Activated CD4-positive, alpha-beta T cell treated with anti-CD3 and anti-CD28 coated beads for 36 hours (primary cell): ENCODE measurements at regions of chr5 and their contacts with region 1.

Region 1: GRCh38 chr5:157743163-157744050 is at the start of gene LSM11:
- DNase-seq: peak; percentile 95
- ATAC-seq: peak; percentile 92
- H3K4me3 Mint-ChIP-seq: peak within 1 kb of the TSS; percentile 93
- H3K27ac Mint-ChIP-seq: peak within 1 kb of the TSS; percentile 89
- H3K4me1 Mint-ChIP-seq: peaks cover 36% of the 10 kb centered on the region
- H3K27me3 Mint-ChIP-seq: no peaks in the 10 kb centered on the region
- total RNA-seq, gene LSM11: 6.2 to 8.0 TPM

Region 2: DNA sequence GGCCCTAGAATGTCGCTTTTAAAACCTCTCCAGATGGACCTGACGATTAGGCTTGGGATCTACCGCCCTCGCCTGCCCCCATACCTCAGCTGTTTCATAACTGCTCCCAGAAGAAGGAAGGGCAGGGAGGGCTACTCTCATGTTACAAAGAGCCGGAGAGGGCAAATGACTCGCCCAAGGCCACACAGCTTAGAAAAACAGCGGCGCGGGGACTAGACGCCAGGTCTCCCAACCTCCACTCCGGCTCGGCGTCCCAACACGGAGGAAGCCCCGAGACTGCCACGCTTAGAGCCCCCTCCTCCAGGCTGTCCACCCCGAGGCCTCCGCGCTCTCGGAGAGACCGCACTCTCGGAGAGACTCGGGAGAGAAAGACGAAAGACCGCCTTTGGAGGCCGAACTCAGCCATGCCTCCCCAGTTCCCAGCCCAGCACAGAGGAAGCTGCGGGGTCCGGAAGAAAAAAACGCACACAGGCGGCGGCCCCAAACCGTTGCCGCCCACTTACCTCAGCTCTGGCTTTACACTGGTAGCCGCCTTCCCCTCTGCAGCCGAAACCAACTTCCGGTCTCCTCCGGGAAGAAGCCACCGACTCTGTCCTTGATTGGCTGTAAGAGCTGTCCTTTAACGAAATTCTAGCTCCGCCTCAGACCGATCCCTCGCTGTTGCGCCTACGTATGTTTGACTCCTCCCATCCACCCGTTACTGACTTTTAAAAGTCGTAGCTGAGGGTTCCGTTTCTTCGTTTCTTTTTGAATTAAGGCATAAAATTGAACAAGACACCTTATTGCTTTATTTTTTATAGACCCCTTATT is 600.9 kb before region 1 on chr5 and contains the start of gene MED7:
- CTCF ChIA-PET with region 1: no interaction called
- POLR2A ChIA-PET with region 1: no interaction called
- intact Hi-C with region 1: loop called in 1 of 2 experiments (anchors 2 kb)
- DNase-seq: peak; percentile 95
- ATAC-seq: peak; percentile 98
- H3K4me3 Mint-ChIP-seq: peak within 1 kb of the TSS; percentile 84
- H3K27ac Mint-ChIP-seq: peak within 1 kb of the TSS; percentile 99
- H3K4me1 Mint-ChIP-seq: peaks cover 46% of the 10 kb centered on the region
- H3K27me3 Mint-ChIP-seq: no peaks in the 10 kb centered on the region
- total RNA-seq, gene MED7: 10.0 to 16.9 TPM

Region 3: DNA sequence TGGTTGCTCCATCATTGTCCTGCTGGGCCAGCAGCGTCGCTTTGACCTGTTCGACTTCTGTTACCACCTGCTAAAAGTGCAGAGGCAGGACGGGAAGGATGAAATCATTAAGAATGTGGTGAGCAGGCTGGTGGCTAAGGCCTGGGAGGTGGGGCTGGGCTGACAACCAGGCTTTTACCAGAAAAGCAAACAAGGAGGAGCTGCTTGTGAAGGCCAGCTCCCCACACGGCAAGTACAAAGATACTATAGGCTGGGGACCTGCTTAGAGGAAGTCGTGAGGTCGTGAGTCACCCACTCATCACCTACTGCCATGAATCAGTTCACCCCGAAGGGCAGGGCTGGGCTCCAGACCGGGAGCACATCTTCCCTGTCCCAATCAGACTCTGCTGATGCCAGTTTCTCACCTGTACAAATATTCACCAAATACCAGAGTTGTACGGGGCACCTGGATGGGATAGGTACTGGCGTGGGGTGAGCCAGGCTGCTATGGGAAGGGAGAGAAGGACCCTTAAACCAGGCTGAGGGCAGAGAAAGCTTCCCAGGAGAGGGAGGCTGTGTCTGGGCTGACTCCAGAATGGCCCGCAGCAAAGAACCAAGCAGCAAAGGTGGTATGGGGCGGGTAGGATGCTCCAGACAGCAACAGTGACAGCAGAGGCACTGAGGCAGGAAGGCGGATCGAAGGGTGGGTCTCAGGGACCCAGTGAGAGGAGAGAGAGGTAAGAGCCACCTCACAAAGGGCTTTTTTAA is 352.7 kb before region 1 on chr5:
- CTCF ChIA-PET with region 1: interaction called, 9 read pairs
- POLR2A ChIA-PET with region 1: no interaction called
- intact Hi-C with region 1: loop called in 1 of 2 experiments (anchors 1 kb)
- DNase-seq: peak; percentile 88
- ATAC-seq: peak; percentile 98
- H3K4me3 Mint-ChIP-seq: peak overlapping the region; percentile 12
- H3K27ac Mint-ChIP-seq: peak overlapping the region; percentile 96
- H3K4me1 Mint-ChIP-seq: peaks cover 24% of the 10 kb centered on the region
- H3K27me3 Mint-ChIP-seq: no peaks in the 10 kb centered on the region

Region 4: DNA sequence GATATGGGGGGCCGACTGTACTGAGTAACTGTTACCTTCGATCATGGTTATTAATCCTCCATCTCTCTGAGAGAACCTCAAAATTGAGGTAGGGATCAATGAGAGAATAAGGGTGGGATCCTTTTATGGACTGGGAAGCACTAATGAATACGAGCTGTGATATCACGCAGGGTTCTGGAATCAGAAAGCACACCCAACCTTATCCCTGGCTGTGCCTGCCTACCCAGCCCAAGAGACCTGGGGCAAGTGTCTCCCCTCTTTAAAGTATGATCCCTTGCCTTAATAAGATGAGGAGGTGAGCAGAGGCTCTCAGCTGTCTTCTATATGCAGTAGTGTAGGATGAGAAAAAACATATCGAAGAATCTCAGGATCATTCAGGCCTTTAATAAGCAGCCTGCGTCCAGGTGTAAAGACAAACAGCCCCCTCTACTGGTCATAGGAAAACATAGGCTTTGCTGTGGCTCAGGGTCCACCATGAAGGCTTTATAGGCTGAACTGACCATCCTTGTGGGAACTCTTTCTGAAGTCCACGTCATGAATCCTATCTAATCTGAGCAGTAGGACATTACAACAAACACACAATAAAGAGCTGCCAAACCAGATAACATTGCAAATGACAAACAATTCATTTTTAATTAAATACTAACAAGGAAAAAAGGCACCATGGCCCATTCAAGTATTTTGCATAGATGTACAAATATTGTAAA is 266.6 kb before region 1 on chr5:
- CTCF ChIA-PET with region 1: interaction called, 5 read pairs
- POLR2A ChIA-PET with region 1: no interaction called
- intact Hi-C with region 1: loop called in 1 of 2 experiments (anchors 5 kb)
- DNase-seq: peak; percentile 42
- ATAC-seq: peak; percentile 68
- H3K4me3 Mint-ChIP-seq: no peak overlapping the region
- H3K27ac Mint-ChIP-seq: no peak overlapping the region
- H3K4me1 Mint-ChIP-seq: peaks cover 9% of the 10 kb centered on the region
- H3K27me3 Mint-ChIP-seq: no peaks in the 10 kb centered on the region

Region 5: DNA sequence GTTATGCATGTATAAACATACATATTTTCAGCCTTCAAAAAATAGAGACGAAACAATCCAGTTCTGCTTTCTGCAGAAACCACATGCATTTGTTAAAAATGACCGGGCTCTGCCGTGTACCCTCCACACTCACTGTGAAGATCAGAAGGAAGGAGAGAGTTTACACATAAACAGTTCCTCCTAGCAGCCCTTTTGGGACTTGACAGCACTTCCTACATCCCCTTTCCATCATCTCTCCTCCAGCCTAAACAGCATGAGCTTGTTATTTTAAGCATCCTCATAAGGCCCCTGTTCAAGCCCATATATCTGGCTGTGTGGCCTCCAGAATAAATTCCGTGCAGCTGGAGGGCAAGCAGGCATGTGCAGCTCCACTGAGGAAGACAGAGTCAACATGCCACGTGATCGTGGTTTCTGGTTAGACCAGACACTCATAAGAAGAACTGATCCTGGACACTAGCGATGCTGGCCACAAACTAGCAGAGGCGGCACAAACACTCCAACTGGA is 241.2 kb before region 1 on chr5:
- CTCF ChIA-PET with region 1: no interaction called
- POLR2A ChIA-PET with region 1: no interaction called
- intact Hi-C with region 1: no loop called
- DNase-seq: no peak
- ATAC-seq: no peak
- H3K4me3 Mint-ChIP-seq: no peak overlapping the region
- H3K27ac Mint-ChIP-seq: no peak overlapping the region
- H3K4me1 Mint-ChIP-seq: peaks cover 11% of the 10 kb centered on the region
- H3K27me3 Mint-ChIP-seq: no peaks in the 10 kb centered on the region

Region 6: DNA sequence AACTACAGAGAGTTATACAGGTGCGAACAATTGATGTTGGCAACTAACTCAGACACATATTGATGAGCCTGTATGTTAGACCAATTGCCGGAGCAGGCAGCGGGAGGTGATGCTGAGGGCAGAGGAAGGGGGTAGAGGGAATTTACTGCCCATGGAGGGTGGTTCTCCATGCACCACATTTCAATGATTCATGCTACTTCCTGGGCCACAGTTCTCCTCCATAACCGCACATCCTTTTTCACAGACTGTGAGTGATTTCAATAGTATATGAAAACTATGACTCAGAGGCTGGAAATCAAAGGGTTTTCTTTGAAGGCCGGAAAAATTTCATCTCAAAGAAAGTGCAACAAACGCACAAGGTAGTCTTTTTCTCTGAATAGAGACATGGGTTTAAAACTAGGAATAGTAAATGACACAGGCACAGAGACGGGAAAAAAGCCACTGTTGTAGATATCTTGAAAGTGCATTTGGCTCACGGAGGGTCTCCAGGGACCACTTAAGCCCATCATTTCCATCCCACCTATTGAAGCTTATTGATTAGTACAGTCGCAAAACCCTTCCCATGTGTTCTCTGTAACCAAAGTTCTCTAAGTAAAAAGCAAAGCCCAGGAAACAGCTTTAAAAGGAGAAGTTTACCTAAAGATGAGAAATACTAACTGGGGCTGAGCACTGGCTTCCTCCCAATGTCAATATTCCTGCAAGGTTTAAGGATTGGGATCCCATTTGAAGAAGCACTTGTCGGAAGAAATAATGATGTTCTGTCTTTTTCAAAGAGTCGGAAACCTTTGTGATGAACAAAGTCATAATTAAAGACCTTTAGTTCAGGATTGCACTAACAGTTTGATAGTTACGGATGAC is 139.8 kb before region 1 on chr5:
- CTCF ChIA-PET with region 1: no interaction called
- POLR2A ChIA-PET with region 1: no interaction called
- intact Hi-C with region 1: loop called in 1 of 2 experiments (anchors 5 kb)
- DNase-seq: peak; percentile 78
- ATAC-seq: peak; percentile 44
- H3K4me3 Mint-ChIP-seq: peak overlapping the region; percentile 49
- H3K27ac Mint-ChIP-seq: peak overlapping the region; percentile 79
- H3K4me1 Mint-ChIP-seq: peaks cover 88% of the 10 kb centered on the region
- H3K27me3 Mint-ChIP-seq: no peaks in the 10 kb centered on the region

Region 7: DNA sequence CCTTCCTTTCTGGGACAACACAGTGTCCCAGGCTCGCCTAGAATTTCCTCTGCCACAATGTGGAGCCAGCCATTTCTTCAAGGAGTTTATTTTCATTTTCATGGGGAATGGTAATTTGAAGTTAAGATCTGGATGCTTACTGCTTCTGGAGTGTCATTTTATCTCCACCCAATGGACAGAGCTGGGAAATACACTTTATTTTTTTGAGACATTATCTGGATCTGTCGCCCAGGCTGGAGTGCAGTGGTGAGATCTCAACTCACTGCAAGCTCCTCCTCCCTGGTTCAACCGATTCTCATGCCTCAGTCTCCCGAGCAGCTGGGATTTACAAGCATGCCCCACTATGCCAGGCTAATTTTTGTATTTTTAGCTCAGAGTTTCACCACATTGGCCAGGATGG is 24.9 kb before region 1 on chr5:
- CTCF ChIA-PET with region 1: interaction called, 21 read pairs
- POLR2A ChIA-PET with region 1: no interaction called
- intact Hi-C with region 1: loop called (anchors 1 kb)
- DNase-seq: peak; percentile 35
- ATAC-seq: peak; percentile 94
- H3K4me3 Mint-ChIP-seq: no peak overlapping the region
- H3K27ac Mint-ChIP-seq: no peak overlapping the region
- H3K4me1 Mint-ChIP-seq: peaks cover 24% of the 10 kb centered on the region
- H3K27me3 Mint-ChIP-seq: no peaks in the 10 kb centered on the region

Region 8: DNA sequence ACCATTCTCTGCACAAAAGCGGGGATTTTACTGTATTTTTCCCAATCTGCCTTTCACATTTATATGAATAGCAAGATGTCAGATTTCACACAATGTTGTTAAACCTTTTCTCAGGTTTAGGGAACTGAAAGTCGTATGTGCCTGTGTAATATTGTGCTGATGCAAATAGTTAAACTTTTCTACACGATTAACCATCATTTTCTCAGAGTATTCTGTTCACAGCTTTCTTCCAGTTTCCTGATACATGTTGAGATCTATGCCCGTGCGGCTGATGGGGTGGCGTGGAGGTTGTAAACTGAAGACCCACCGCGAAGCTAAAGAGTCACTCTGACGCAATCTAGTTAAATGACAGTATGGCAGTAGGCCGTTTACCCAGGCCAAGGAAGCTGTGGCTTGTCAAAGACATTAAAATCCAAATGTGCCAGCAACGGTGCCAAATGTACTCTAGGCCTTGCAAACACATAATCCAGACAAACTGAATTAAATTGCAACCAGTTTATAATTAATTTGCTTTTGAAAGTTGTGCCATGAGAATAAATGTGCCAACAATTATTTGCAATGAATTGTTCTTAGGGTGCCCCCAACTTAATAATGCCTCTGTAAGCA is 1210.6 kb after region 1 on chr5:
- CTCF ChIA-PET with region 1: no interaction called
- POLR2A ChIA-PET with region 1: no interaction called
- intact Hi-C with region 1: no loop called
- DNase-seq: no peak
- ATAC-seq: no peak
- H3K4me3 Mint-ChIP-seq: no peak overlapping the region
- H3K27ac Mint-ChIP-seq: no peak overlapping the region
- H3K4me1 Mint-ChIP-seq: peaks cover 14% of the 10 kb centered on the region
- H3K27me3 Mint-ChIP-seq: no peaks in the 10 kb centered on the region